ENCODE measurements at regions of chr17 and their contacts with region 1.

Region 1: GRCh38 chr17:7136266-7136877 is 21.8 kb upstream of the ASGR2 start:
- DNase-seq: peak; percentile 52
- H3K27ac ChIP-seq: no peak overlapping the region
- CTCF ChIP-seq: peak; percentile 92

Region 2: DNA sequence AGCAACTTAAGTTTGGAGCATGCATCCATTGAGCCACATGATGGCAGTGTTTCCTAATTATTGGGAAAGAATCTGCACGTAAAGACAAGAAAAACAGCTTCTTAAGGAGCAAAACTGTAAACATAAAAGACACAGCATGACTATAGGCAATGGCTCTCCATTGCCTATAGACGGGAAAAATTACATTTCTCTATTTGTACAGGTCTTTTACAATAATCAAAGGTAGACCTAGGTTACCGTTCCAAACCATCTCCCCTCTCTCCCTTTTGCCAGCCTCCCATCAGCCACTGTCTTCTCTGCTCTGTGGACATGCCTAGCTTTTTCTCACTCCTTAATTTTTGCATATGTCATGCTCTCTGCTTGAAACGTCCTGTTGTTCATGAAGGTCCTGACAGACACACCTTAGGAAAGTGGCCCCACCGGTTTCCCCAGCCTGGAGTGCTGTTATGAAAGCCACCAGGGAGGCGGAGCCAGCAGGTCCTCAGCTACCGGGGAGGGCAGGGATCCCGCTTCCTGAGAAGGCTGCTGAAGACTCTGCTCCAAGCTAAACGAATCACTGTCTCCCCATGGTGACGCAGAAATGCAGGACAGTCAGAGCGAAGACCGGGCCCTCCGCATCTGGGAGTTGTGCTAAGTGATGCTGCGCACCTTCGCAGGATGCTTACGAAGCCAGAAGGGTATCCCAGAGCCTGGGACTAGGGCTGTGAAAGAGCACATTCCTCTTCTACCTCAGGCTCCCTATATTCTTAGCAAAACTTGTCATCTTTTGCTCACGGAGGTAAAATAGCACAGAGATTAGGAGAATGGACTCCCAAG is 90.3 kb before region 1 on chr17:
- CTCF ChIA-PET with region 1: interaction called, 63 read pairs
- POLR2A ChIA-PET with region 1: no interaction called
- DNase-seq: peak; percentile 75
- H3K27ac ChIP-seq: no peak overlapping the region
- CTCF ChIP-seq: peak; percentile 78

Region 3: GRCh38 chr17:7056386-7056785 is 80.0 kb before region 1 on chr17:
- CTCF ChIA-PET with region 1: interaction called, 63 read pairs
- POLR2A ChIA-PET with region 1: no interaction called
- DNase-seq: no peak
- H3K27ac ChIP-seq: no peak overlapping the region
- CTCF ChIP-seq: no peak

Region 4: DNA sequence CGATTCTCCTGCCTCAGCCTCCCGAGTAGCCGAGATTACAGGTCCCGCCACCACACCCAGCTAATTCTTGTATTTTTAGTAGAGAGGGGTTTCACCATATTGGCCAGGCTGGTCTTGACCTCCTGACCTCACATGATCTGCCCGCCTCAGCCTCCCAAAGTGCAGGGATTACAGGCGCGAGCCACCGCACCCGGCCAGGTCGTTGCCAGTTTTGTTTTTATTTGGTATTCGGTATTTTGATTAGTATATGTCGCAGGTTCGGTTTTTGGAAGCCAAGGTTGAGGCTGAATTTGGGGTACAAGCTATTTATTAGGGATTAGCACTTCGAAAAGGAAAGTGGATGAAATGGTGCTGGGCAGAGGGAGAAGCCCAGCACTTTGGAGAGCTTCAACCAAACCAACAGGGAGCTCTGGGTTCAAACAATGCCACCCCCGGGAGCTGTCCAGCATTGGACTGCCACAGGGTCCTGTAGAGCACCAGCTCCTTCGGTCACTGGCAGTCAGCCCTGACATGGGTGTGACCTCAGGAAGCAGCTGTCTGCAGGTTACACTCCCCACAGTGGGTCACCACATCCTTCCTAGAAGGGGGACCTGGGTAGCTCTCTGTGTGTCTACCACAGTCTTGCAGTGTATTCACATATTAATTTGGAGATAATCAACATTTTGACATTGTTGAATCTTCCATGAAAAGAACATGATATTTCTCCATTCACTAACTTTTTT is 54.9 kb before region 1 on chr17:
- CTCF ChIA-PET with region 1: no interaction called
- POLR2A ChIA-PET with region 1: no interaction called
- DNase-seq: no peak
- H3K27ac ChIP-seq: no peak overlapping the region
- CTCF ChIP-seq: no peak

Region 5: GRCh38 chr17:7122381-7122780 is 14.0 kb before region 1 on chr17:
- CTCF ChIA-PET with region 1: no interaction called
- POLR2A ChIA-PET with region 1: no interaction called
- DNase-seq: no peak
- H3K27ac ChIP-seq: no peak overlapping the region
- CTCF ChIP-seq: no peak

Region 6: GRCh38 chr17:7211491-7212273 is 75.3 kb after region 1 on chr17:
- CTCF ChIA-PET with region 1: no interaction called
- POLR2A ChIA-PET with region 1: no interaction called
- DNase-seq: no peak
- H3K27ac ChIP-seq: no peak overlapping the region
- CTCF ChIP-seq: no peak